Dorsolateral prefrontal cortex (tissue), 120 donors: ENCODE measurements at regions of chr11 and their contacts with region 1.

Region 1: GRCh38 chr11:125111343-125112207 is at the start of gene TMEM218:
- DNase-seq: peak; percentile 99 to 100 (median 100)
- H3K4me3 ChIP-seq: peak within 1 kb of the TSS; percentile 50 to 97 (median 86)
- H3K27ac ChIP-seq: peak within 1 kb of the TSS in 57 of 59 donors; percentile 43 to 92 (median 78)
- H3K27me3 ChIP-seq: no peaks in the 10 kb centered on the region
- CTCF ChIP-seq: peak in 14 of 56 donors; percentile 7 to 42 (median 24)
- total RNA-seq, gene TMEM218: 5.4 to 17.7 (median 9.7) TPM

Region 2: DNA sequence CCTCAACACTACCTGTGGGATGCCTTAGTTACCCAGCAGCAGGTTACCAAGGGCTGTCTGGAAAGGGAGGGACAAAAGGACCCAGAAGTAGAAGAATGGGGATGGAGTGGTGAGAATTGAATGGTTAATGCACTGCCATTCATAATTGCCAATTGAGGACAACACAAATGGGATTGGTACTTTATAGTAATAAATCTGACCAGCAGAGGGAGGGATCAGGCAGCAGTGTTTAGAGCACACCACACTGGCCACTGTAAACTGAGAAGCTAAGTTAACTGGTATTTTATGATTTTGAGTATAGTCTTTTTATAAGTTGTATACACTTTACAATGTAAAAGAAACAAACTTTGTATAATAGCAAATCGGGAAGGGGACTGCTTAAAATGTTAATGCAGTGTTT is 478.2 kb before region 1 on chr11:
- intact Hi-C with region 1: no loop called
- DNase-seq: no peak
- H3K4me3 ChIP-seq: no peak overlapping the region
- H3K27ac ChIP-seq: no peak overlapping the region
- H3K27me3 ChIP-seq: no peaks in the 10 kb centered on the region
- CTCF ChIP-seq: peak in 16 of 56 donors; percentile 9 to 44 (median 22)

Region 3: DNA sequence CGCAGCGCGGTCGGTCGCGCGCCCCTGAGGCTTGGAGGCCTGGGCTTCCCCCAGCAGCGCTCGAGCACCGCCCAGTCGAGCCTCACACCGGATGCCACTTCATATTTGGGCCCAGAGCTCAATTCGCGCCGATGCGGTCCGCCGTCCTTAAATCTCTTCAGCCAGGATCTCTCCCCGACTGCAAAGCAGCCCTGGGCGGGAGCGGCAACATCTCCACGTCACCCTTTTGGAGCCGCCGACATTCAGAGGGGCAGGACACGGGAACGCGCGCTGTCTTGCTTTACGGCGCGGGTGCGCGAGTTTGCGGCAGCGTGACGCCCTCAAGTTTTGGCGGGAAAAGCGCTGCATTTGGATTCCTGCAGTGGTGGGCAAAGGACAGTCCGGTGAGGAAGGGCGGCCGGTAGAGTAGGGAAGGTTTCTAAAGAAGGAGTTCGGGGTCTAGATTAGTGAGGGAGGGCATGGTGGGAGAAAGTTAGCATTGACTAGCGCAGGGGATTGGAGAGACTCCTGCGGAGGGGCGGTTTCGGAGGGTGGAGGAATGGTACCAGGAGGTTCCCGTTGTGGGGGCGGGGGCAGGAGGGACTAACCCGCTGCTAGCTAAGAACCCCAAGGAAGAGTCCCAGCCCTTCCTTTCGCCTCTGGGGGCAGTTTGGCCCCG is 514.2 kb after region 1 on chr11:
- intact Hi-C with region 1: loop called in 1 of 2 experiments (anchors 5 kb)
- DNase-seq: peak; percentile 82 to 95 (median 88)
- H3K4me3 ChIP-seq: peak overlapping the region; percentile 55 to 95 (median 78)
- H3K27ac ChIP-seq: peak overlapping the region; percentile 73 to 99 (median 95)
- H3K27me3 ChIP-seq: no peaks in the 10 kb centered on the region
- CTCF ChIP-seq: peak in 33 of 56 donors; percentile 2 to 60 (median 29)